Activated B cell treated with CpG ODN at 0.5 μM for 24 hours (primary cell): ENCODE measurements at regions of chr9 and their contacts with region 1.

Region 1: GRCh38 chr9:135500525-135501358 is at the start of gene MRPS2:
- DNase-seq: peak; percentile 91
- ATAC-seq: peak; percentile 93
- H3K4me3 Mint-ChIP-seq: peak within 1 kb of the TSS; percentile 97
- H3K27ac Mint-ChIP-seq: peak within 1 kb of the TSS; percentile 92
- H3K4me1 Mint-ChIP-seq: peaks cover 30% of the 10 kb centered on the region
- H3K27me3 Mint-ChIP-seq: no peaks in the 10 kb centered on the region
- CTCF ChIP-seq: no peak
- total RNA-seq, gene MRPS2: 35.1 and 39.7 TPM in 2 replicates

Region 2: DNA sequence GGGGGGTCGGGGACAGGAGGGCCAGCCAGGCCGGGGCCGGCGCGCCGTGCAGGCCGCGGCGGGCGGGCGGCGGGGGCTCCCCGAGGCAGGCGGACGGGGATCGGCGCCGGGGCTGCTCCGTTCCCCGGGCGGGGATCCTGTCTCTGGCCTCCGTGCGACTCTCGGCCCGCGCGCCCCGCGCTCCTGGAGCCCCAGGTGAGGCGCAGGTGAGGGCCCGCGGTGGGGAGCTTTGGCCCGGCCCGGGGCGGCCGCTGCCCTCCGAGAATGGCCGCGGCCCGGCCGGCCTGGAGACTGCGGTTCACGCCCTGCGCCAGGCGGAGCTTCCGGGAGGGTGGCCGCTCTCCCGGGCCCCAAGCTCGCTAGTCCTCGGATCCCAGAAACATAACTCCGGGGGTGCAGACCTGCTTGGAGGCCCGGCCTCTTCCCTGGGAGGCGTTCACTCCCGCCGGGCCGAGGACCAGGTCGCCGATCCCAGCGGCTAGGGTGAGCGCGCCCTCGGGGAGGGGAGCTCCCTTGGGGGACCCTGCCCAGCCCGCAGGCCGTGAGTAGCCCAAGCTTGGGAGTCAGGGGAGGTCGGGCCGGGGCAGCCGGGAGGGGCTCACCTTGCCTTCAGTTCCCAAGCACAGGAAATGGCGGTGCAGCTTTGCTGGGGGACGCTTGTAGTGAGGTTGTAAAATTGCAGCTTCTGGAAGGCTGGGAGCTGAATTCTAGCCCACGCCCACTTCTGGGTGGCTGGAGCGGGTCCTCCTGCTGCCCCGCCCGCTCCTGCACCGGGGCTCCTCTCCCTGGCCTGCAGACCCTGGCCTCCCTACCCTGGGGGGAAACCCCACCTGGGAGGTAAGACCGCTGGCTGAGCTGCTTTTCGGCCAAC is 20.4 kb before region 1 on chr9:
- CTCF ChIA-PET with region 1: interaction called, 7 read pairs
- POLR2A ChIA-PET with region 1: no interaction called
- intact Hi-C with region 1: loop called (anchors 1 kb)
- DNase-seq: peak; percentile 31
- ATAC-seq: peak; percentile 31
- H3K4me3 Mint-ChIP-seq: peak overlapping the region; percentile 61
- H3K27ac Mint-ChIP-seq: no peak overlapping the region
- H3K4me1 Mint-ChIP-seq: peaks cover 10% of the 10 kb centered on the region
- H3K27me3 Mint-ChIP-seq: peaks cover 2% of the 10 kb centered on the region
- CTCF ChIP-seq: no peak

Region 3: GRCh38 chr9:135551031-135551430 is 50.3 kb after region 1 on chr9:
- CTCF ChIA-PET with region 1: no interaction called
- POLR2A ChIA-PET with region 1: no interaction called
- intact Hi-C with region 1: no loop called
- DNase-seq: no peak
- ATAC-seq: no peak
- H3K4me3 Mint-ChIP-seq: no peak overlapping the region
- H3K27ac Mint-ChIP-seq: no peak overlapping the region
- H3K4me1 Mint-ChIP-seq: no peaks in the 10 kb centered on the region
- H3K27me3 Mint-ChIP-seq: no peaks in the 10 kb centered on the region
- CTCF ChIP-seq: no peak